Activated CD4-positive, alpha-beta memory T cell treated with anti-CD3 and anti-CD28 coated beads for 36 hours (primary cell): ENCODE measurements at regions of chr6 and their contacts with region 1.

Region 1: GRCh38 chr6:38350942-38351341 is 288.8 kb downstream of the BTBD9 start:
- DNase-seq: no peak
- H3K4me3 Mint-ChIP-seq: no peak overlapping the region
- H3K27ac Mint-ChIP-seq: no peak overlapping the region
- H3K4me1 Mint-ChIP-seq: peaks cover 14% of the 10 kb centered on the region
- H3K27me3 Mint-ChIP-seq: no peaks in the 10 kb centered on the region

Region 2: GRCh38 chr6:38018755-38019165 is 332.2 kb before region 1 on chr6:
- CTCF ChIA-PET with region 1: no interaction called
- POLR2A ChIA-PET with region 1: no interaction called
- intact Hi-C with region 1: no loop called
- DNase-seq: peak; percentile 15
- H3K4me3 Mint-ChIP-seq: no peak overlapping the region
- H3K27ac Mint-ChIP-seq: no peak overlapping the region
- H3K4me1 Mint-ChIP-seq: peaks cover 9% of the 10 kb centered on the region
- H3K27me3 Mint-ChIP-seq: no peaks in the 10 kb centered on the region

Region 3: GRCh38 chr6:38034274-38034914 is 316.5 kb before region 1 on chr6:
- CTCF ChIA-PET with region 1: no interaction called
- POLR2A ChIA-PET with region 1: no interaction called
- intact Hi-C with region 1: loop called (anchors 10 kb)
- DNase-seq: no peak
- H3K4me3 Mint-ChIP-seq: no peak overlapping the region
- H3K27ac Mint-ChIP-seq: no peak overlapping the region
- H3K4me1 Mint-ChIP-seq: peaks cover 40% of the 10 kb centered on the region
- H3K27me3 Mint-ChIP-seq: no peaks in the 10 kb centered on the region

Region 4: DNA sequence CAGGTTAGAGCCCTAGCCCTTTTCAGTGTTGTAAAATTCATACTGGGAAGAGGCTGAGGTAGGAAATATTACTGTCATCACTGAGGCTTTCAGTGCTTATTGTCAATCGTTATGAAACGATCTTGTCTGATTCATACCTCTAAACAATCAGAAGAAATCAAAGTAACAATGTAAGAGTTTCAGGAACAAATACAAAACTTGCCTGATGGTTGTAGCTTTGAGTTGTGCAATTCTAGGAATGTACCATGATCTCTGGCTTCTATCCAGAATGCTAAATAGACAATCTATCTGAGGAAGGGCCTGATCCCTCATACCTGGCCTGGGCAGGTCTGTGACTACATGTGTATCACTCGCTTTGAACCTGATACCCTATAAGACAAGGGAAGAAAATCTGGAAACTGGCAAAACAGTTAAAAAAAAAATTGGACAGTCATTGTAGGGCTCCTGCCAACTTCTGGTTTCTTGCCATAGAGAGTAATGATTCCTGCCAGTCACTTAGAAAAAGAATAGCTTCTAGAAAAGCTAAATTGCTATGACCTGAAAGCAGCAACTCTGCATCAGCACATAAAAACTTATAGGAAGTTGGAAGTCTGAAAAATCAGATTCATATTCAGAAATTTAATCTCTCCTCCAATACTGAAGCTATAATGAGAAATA is 54.1 kb after region 1 on chr6:
- CTCF ChIA-PET with region 1: no interaction called
- POLR2A ChIA-PET with region 1: interaction called, 3 read pairs
- intact Hi-C with region 1: loop called (anchors 1 kb)
- DNase-seq: peak; percentile 11
- H3K4me3 Mint-ChIP-seq: no peak overlapping the region
- H3K27ac Mint-ChIP-seq: peak overlapping the region; percentile 47
- H3K4me1 Mint-ChIP-seq: peaks cover 31% of the 10 kb centered on the region
- H3K27me3 Mint-ChIP-seq: no peaks in the 10 kb centered on the region

Region 5: GRCh38 chr6:38413102-38413800 is 62.3 kb after region 1 on chr6:
- CTCF ChIA-PET with region 1: no interaction called
- POLR2A ChIA-PET with region 1: no interaction called
- intact Hi-C with region 1: loop called (anchors 2 kb)
- DNase-seq: peak; percentile 16
- H3K4me3 Mint-ChIP-seq: peak overlapping the region; percentile 33
- H3K27ac Mint-ChIP-seq: peak overlapping the region; percentile 79
- H3K4me1 Mint-ChIP-seq: peaks cover 24% of the 10 kb centered on the region
- H3K27me3 Mint-ChIP-seq: no peaks in the 10 kb centered on the region

Region 6: GRCh38 chr6:38688579-38689087 is 337.7 kb after region 1 on chr6:
- CTCF ChIA-PET with region 1: no interaction called
- POLR2A ChIA-PET with region 1: no interaction called
- intact Hi-C with region 1: no loop called
- DNase-seq: no peak
- H3K4me3 Mint-ChIP-seq: no peak overlapping the region
- H3K27ac Mint-ChIP-seq: no peak overlapping the region
- H3K4me1 Mint-ChIP-seq: peaks cover 10% of the 10 kb centered on the region
- H3K27me3 Mint-ChIP-seq: no peaks in the 10 kb centered on the region